Heart right ventricle (tissue), 16 donors: ENCODE measurements at regions of chr5 and their contacts with region 1.

Region 1: GRCh38 chr5:160105686-160106360 is 13.4 kb downstream of the PWWP2A start:
- DNase-seq: no peak
- ATAC-seq: no peak
- H3K4me3 ChIP-seq: no peak overlapping the region
- H3K27ac ChIP-seq: no peak overlapping the region
- H3K4me1 ChIP-seq: peaks cover 0 to 36% (median 16%) of the 10 kb centered on the region in 9 donors
- H3K27me3 ChIP-seq: no peaks in the 10 kb centered on the region
- CTCF ChIP-seq: no peak

Region 2: DNA sequence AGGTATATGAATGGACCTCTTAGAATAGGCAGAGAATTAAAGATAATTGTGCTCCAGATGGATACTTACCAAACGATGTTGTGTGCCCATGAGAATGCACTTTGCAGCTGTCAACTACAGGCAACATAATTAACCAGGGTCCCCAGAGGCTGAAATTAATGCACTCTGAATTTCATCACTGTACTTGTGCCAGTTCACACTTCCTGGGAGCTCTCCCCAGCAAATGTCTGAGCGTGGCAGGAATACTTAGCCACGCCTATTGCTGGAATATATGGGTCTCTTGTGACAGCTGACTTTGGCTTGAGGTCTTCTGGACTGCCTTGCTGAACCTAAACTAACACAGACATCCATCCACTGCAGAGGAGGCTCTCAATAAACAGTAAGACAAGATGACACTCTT is 276.5 kb after region 1 on chr5:
- intact Hi-C with region 1: loop called in 1 of 10 experiments (anchors 10 kb)
- DNase-seq: no peak
- ATAC-seq: no peak
- H3K4me3 ChIP-seq: no peak overlapping the region
- H3K27ac ChIP-seq: no peak overlapping the region
- H3K4me1 ChIP-seq: peaks cover 0 to 5% (median 0%) of the 10 kb centered on the region in 9 donors
- H3K27me3 ChIP-seq: no peaks in the 10 kb centered on the region
- CTCF ChIP-seq: no peak